Naive thymus-derived CD4-positive, alpha-beta T cell (primary cell): ENCODE measurements at regions of chr17 and their contacts with region 1.

Region 1: GRCh38 chr17:416293-417206 is 63.9 kb upstream of the RPH3AL start:
- DNase-seq: peak in 8 of 9 donors; percentile 54 to 76 (median 65)
- ATAC-seq: peak; percentile 64
- H3K4me3 ChIP-seq: peak overlapping the region; percentile 80
- H3K4me3 Mint-ChIP-seq: peak overlapping the region; percentile 91 to 98 (median 94)
- H3K27ac ChIP-seq: peak overlapping the region; percentile 88
- H3K27ac Mint-ChIP-seq: peak overlapping the region; percentile 95 to 99 (median 97)
- H3K4me1 ChIP-seq: peaks cover 61 to 83% of the 10 kb centered on the region in 2 donors
- H3K4me1 Mint-ChIP-seq: peaks cover 50 to 93% (median 87%) of the 10 kb centered on the region in 7 donors
- H3K27me3 ChIP-seq: no peaks in the 10 kb centered on the region
- H3K27me3 Mint-ChIP-seq: peaks cover 0 to 2% (median 0%) of the 10 kb centered on the region in 5 donors

Region 2: DNA sequence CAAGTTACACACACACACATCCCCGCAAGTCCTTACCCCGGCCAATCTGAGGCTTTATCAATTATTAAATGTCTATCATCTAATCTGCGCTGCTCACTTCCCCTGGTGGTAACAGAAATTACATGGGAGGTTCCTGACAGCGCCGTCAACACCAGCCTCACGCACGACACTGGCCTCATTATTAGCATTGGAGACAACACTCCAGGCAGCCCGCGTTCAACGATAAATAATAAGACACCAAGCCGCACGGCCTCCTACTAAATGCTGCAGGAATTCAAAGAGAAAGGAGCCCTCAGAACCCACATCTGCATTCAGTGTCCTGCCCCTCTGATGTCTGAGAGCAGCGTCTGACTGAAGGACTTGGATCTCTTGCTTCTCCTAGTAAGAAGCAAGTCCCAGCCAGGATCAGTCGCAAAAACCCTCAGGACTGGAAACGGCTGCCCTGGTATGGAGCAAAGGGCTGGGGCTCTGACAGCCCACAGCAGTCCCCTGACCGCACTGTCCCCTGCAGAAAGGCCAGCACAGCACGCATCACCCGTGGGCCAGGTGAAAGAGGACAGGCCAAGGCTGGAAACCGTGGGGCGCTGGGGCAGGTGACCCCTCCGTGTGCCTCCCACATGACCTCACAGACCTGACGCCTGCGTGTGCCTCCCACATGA is 56.3 kb before region 1 on chr17:
- CTCF ChIA-PET with region 1: no interaction called
- POLR2A ChIA-PET with region 1: no interaction called
- intact Hi-C with region 1: no loop called
- DNase-seq: no peak
- ATAC-seq: no peak
- H3K4me3 ChIP-seq: no peak overlapping the region
- H3K4me3 Mint-ChIP-seq: no peak overlapping the region
- H3K27ac ChIP-seq: no peak overlapping the region
- H3K27ac Mint-ChIP-seq: no peak overlapping the region
- H3K4me1 ChIP-seq: peaks cover 0 to 8% of the 10 kb centered on the region in 2 donors
- H3K4me1 Mint-ChIP-seq: peaks cover 0 to 29% (median 11%) of the 10 kb centered on the region in 7 donors
- H3K27me3 ChIP-seq: no peaks in the 10 kb centered on the region
- H3K27me3 Mint-ChIP-seq: peaks cover 0 to 10% (median 0%) of the 10 kb centered on the region in 5 donors

Region 3: GRCh38 chr17:436571-436970 is 20.0 kb after region 1 on chr17:
- CTCF ChIA-PET with region 1: interaction called, 4 read pairs
- POLR2A ChIA-PET with region 1: interaction called, 6 read pairs
- intact Hi-C with region 1: loop called (anchors 2 kb)
- DNase-seq: no peak
- ATAC-seq: no peak
- H3K4me3 ChIP-seq: no peak overlapping the region
- H3K4me3 Mint-ChIP-seq: no peak overlapping the region
- H3K27ac ChIP-seq: no peak overlapping the region
- H3K27ac Mint-ChIP-seq: no peak overlapping the region
- H3K4me1 ChIP-seq: no peaks in the 10 kb centered on the region
- H3K4me1 Mint-ChIP-seq: peaks cover 0 to 25% (median 14%) of the 10 kb centered on the region in 7 donors
- H3K27me3 ChIP-seq: no peaks in the 10 kb centered on the region
- H3K27me3 Mint-ChIP-seq: no peaks in the 10 kb centered on the region

Region 4: DNA sequence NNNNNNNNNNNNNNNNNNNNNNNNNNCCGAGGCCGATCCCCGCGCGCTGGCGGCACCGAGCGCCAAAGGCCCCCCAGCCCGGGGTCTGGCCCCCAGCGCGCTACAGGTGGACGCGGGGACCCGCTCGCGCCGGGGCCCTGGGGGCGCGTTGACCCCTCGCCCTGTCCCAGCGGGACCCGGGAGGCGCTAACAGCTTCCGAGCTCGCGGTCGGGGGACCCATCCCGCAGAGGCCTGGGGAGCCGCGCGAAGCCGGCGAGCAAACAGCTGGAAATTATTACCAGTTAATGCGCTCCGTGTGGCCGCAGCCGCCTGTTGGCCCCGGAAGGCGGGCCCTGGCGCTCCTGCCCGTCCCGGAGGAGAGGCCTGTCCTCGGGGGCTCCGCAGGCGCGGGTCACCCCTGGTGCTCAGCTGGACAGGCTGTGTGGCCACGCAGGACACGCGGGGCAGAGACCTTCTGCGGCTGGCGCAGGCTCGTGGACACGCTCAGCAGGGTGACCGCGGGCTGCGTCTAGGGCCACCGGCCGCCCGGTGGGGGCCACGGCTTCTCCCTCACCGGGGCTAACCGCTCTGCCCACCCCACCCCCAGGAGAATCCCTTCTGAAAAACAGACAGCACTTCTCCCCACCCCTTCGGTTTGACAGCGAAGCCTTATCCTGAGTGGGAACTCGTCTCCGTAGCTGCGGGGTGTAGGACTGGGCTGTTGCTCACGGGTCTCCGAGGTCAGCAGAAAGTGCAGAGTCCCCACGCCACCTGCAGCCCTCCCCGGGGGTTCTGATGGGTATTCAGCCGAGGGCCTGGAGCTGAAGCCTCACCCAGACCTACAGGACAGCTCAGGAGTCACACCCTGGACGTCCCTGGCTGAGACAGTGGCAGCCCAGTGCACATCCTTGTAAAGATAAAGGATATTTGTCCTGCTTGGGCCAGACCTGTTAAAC is 74.8 kb after region 1 on chr17:
- CTCF ChIA-PET with region 1: interaction called, 14 read pairs
- POLR2A ChIA-PET with region 1: interaction called, 16 read pairs
- intact Hi-C with region 1: no loop called
- DNase-seq: peak in 8 of 9 donors; percentile 15 to 67 (median 49)
- ATAC-seq: peak; percentile 34
- H3K4me3 ChIP-seq: peak overlapping the region; percentile 39
- H3K4me3 Mint-ChIP-seq: peak overlapping the region; percentile 33 to 88 (median 71)
- H3K27ac ChIP-seq: peak overlapping the region; percentile 36
- H3K27ac Mint-ChIP-seq: peak overlapping the region; percentile 45 to 91 (median 72)
- H3K4me1 ChIP-seq: peaks cover 0 to 12% of the 10 kb centered on the region in 2 donors
- H3K4me1 Mint-ChIP-seq: peaks cover 6 to 21% (median 12%) of the 10 kb centered on the region in 7 donors
- H3K27me3 ChIP-seq: no peaks in the 10 kb centered on the region
- H3K27me3 Mint-ChIP-seq: peaks cover 0 to 13% (median 0%) of the 10 kb centered on the region in 5 donors

Region 5: DNA sequence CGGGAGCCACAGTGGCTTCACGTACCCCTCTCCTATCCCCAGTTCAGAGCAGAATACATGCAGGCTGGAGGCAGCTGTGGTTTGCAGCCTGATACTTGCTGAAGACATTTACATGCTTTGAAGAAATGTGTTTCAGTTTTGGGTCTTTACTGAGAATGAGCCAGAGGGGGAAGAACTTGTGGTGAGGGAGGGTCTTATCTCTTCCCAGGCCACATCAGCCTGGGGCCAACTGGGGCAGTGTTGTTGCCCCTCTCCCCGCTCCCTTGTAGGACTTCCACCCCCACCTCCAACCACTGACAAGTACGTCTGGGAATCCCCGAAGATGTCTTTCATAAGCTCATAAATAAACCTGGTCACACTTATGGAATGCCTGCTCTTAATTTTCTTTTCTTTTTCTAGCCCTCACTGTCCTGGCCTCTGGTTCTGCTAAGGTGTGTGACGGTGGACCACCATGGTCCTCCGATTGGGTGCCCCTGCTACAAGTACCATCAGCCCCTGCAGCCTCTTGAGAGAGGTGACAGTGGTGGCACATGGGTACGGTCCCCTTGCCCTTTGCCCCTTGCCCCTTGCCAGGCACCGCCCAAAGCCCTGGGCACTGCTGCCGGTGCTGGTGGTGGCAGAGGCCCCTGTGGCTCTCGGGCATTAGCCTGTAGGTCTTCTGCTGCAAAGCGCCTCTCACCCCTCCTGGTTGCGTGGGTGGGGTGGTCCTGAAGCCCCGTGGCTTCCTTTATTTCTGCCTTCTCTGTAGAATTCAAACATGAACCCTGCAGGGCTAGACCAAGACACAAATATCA is 80.9 kb after region 1 on chr17:
- CTCF ChIA-PET with region 1: interaction called, 18 read pairs
- POLR2A ChIA-PET with region 1: interaction called, 18 read pairs
- intact Hi-C with region 1: loop called (anchors 1 kb)
- DNase-seq: peak in 3 of 9 donors; percentile 24 to 42 (median 27)
- ATAC-seq: peak; percentile 12
- H3K4me3 ChIP-seq: no peak overlapping the region
- H3K4me3 Mint-ChIP-seq: peak overlapping the region; percentile 13 to 85 (median 72)
- H3K27ac ChIP-seq: peak overlapping the region; percentile 25
- H3K27ac Mint-ChIP-seq: peak overlapping the region; percentile 67 to 94 (median 82)
- H3K4me1 ChIP-seq: peaks cover 0 to 40% of the 10 kb centered on the region in 2 donors
- H3K4me1 Mint-ChIP-seq: peaks cover 23 to 63% (median 46%) of the 10 kb centered on the region in 7 donors
- H3K27me3 ChIP-seq: no peaks in the 10 kb centered on the region
- H3K27me3 Mint-ChIP-seq: peaks cover 0 to 5% (median 0%) of the 10 kb centered on the region in 5 donors